Left cardiac atrium (tissue), 4 donors: ENCODE measurements at regions of chr4 and their contacts with region 1.

Region 1: GRCh38 chr4:169619959-169620879 is at the start of gene CLCN3:
- DNase-seq: peak; percentile 99
- ATAC-seq: peak; percentile 99 to 100
- total RNA-seq, gene CLCN3: 38.7 to 42.5 TPM

Region 2: DNA sequence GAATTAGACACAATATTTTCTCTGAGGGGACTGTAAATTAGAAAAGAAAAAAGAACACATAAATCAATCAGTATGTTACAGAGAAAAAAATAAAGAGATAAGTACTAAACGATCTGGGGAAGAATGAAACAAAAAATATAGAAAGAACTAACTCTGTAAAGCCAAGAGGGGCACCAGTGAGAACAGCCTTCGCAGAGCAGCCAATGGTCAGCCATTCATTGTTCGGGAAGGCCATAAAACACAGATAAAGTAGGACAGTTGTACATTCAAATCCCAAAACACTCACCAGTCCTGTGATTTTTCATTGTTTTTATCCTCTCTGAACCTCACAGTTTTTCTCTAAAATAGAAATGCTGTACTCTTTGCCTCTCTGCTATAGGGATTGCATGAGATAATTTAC is 135.7 kb before region 1 on chr4:
- intact Hi-C with region 1: no loop called
- DNase-seq: no peak
- ATAC-seq: no peak

Region 3: GRCh38 chr4:169659716-169660670 is 39.8 kb after region 1 on chr4:
- intact Hi-C with region 1: loop called in 1 of 2 experiments (anchors 2 kb)
- DNase-seq: peak; percentile 78
- ATAC-seq: peak; percentile 99 to 100

Region 4: GRCh38 chr4:169707958-169708643 is 87.9 kb after region 1 on chr4:
- intact Hi-C with region 1: loop called (anchors 5 to 10 kb)
- DNase-seq: no peak
- ATAC-seq: peak; percentile 44 to 75

Region 5: DNA sequence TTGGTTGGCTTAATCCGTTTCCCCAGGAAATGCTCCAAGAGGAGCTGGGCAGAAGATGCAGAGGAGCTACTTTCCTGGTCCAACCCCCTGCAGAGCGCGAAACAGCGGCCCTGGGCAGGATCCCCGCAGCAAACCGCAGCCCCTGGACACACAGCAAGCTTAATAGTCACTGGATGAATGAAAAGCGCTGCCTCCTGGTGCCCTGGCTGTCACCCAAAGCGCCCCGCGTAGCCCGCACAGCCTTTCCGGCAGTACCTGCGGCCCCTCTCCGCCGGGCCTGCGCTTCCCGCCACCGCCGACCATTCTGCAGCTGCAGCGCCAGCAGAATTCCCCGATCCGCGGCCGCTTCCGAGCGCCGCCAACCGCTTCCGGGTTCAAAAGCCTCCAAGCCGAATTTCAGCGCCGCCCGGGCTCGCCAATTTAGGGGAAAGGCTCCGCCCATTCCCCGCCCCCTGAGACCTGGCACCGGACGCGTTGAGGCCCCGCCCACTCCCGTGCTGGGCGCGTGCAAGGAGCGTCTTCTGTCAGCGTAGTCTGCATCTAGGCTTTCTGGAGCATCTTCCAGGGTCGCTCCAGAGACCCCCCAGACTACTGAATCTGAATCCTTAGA is 137.5 kb after region 1 on chr4 and contains the start of gene HPF1:
- intact Hi-C with region 1: loop called in 1 of 2 experiments (anchors 10 kb)
- DNase-seq: peak; percentile 95
- ATAC-seq: peak; percentile 98 to 99
- total RNA-seq, gene HPF1: 16.9 to 22.6 TPM

Region 6: GRCh38 chr4:169975838-169976796 is 355.9 kb after region 1 on chr4:
- intact Hi-C with region 1: no loop called
- DNase-seq: no peak
- ATAC-seq: no peak

Region 7: DNA sequence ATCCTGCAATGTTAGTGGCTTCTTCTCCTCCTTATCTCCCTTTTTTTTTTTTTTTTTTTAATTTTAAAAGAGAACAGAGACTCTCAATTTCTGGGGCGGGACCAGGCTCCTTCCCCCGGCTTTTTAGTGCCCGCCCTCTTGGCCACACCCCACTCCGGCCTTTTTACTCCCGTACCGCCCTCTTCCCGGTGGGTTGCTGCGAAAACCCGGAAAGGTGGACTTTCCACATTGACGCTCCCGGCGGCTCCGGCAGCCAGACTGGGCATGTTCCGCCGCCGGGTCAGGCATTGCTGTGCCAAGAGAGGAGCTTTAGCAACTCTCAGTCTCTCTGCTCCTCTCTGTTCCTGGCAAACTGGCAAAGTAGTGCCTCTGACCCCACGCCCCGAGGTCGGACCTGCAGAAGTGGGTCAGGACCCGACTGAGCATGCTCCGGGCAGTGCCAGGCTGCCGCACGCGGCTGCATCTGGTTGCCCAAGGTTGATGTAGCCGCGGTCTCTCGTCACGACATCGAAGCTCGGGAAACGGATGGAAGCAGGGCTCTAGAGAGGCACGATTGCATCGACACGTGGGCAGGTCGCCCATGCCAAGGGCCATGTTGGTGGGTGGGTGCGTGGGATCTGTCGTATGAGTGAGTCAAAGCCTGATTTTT is 407.1 kb after region 1 on chr4:
- intact Hi-C with region 1: loop called in 1 of 2 experiments (anchors 5 kb)
- DNase-seq: peak; percentile 95
- ATAC-seq: peak; percentile 92 to 96